Caco-2 (cell line): ENCODE measurements at regions of chrX and their contacts with region 1.

Region 1: GRCh38 chrX:68146054-68146453 is 287.2 kb downstream of the OPHN1 start:
- DNase-seq: peak in 1 of 2 experiments; percentile 9
- H3K4me3 ChIP-seq: no peak overlapping the region
- H3K4me3 Mint-ChIP-seq: no peak overlapping the region
- H3K27ac Mint-ChIP-seq: no peak overlapping the region
- H3K4me1 ChIP-seq: no peaks in the 10 kb centered on the region
- H3K4me1 Mint-ChIP-seq: no peaks in the 10 kb centered on the region
- H3K27me3 ChIP-seq: no peaks in the 10 kb centered on the region
- H3K27me3 Mint-ChIP-seq: no peaks in the 10 kb centered on the region
- CTCF ChIP-seq: peak in 1 of 2 experiments; percentile 35

Region 2: GRCh38 chrX:66760657-66761056 is 1385.4 kb before region 1 on chrX:
- CTCF ChIA-PET with region 1: no interaction called
- POLR2A ChIA-PET with region 1: no interaction called
- intact Hi-C with region 1: loop called (anchors 2 kb)
- DNase-seq: peak in 1 of 2 experiments; percentile 1
- H3K4me3 ChIP-seq: no peak overlapping the region
- H3K4me3 Mint-ChIP-seq: no peak overlapping the region
- H3K27ac Mint-ChIP-seq: no peak overlapping the region
- H3K4me1 ChIP-seq: no peaks in the 10 kb centered on the region
- H3K4me1 Mint-ChIP-seq: no peaks in the 10 kb centered on the region
- H3K27me3 ChIP-seq: no peaks in the 10 kb centered on the region
- H3K27me3 Mint-ChIP-seq: no peaks in the 10 kb centered on the region
- CTCF ChIP-seq: no peak

Region 3: DNA sequence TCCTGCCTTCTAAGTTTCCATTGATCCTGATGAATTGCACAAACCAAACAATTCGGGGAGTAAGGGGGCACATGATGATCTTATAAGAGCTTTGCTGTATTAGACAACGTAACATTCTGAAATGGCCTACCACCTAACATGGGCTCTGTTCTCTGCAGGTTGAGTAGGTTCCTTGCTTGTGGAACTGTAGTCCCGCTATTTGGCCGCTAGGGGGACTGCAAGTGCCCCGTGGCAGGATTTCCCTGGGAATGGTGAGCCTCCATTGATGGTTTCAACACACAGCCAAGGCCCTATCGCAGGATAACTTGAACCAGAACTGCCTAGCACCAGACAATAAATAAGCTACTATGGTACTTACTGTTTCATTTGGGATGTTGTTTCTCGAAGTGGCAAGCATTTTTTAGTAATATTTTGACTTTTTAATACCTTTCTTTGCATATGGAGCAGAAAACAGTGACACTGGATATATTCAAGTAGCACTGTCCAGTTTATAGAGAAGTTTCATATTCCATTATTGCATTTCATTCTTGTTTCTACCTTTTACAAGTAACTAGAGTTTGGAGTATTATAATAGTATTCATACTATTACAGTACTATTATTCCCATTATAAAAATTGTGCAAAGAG is 590.4 kb before region 1 on chrX:
- CTCF ChIA-PET with region 1: no interaction called
- POLR2A ChIA-PET with region 1: no interaction called
- intact Hi-C with region 1: loop called (anchors 2 kb)
- DNase-seq: peak; percentile 21 to 27
- H3K4me3 ChIP-seq: no peak overlapping the region
- H3K4me3 Mint-ChIP-seq: no peak overlapping the region
- H3K27ac Mint-ChIP-seq: no peak overlapping the region
- H3K4me1 ChIP-seq: no peaks in the 10 kb centered on the region
- H3K4me1 Mint-ChIP-seq: no peaks in the 10 kb centered on the region
- H3K27me3 ChIP-seq: no peaks in the 10 kb centered on the region
- H3K27me3 Mint-ChIP-seq: no peaks in the 10 kb centered on the region
- CTCF ChIP-seq: peak; percentile 60

Region 4: DNA sequence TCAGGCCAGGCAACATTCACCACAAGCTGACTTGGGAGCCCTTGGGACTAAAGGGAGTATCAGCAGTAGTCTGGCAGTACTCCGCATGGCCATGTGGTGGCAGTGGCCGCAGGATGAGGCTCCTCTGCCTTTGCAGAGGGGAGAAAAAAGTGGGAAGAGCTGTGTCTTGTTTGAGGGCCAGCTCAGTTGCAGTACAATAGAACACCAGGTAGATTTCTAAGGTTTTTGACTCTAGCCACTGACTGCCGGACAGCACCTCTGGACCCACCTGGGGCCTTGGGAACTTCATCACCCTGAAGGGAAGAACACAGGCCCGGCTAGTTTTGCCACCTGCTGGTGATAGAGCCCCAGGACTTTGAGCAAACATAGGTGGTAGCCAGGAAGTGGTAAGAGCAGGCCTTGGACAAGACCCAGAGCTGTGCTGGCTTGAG is 127.4 kb before region 1 on chrX:
- CTCF ChIA-PET with region 1: interaction called, 9 read pairs
- POLR2A ChIA-PET with region 1: no interaction called
- intact Hi-C with region 1: loop called (anchors 1 kb)
- DNase-seq: peak; percentile 21 to 32
- H3K4me3 ChIP-seq: no peak overlapping the region
- H3K4me3 Mint-ChIP-seq: no peak overlapping the region
- H3K27ac Mint-ChIP-seq: no peak overlapping the region
- H3K4me1 ChIP-seq: no peaks in the 10 kb centered on the region
- H3K4me1 Mint-ChIP-seq: no peaks in the 10 kb centered on the region
- H3K27me3 ChIP-seq: no peaks in the 10 kb centered on the region
- H3K27me3 Mint-ChIP-seq: no peaks in the 10 kb centered on the region
- CTCF ChIP-seq: no peak